Uterus (tissue), 4 donors: ENCODE measurements at regions of chr15 and their contacts with region 1.

Region 1: GRCh38 chr15:49718234-49718633 is 97.4 kb downstream of the DTWD1 start:
- DNase-seq: no peak
- H3K4me3 ChIP-seq: no peak overlapping the region
- H3K27ac ChIP-seq: peak overlapping the region; percentile 48 to 53
- H3K4me1 ChIP-seq: no peaks in the 10 kb centered on the region
- H3K27me3 ChIP-seq: no peaks in the 10 kb centered on the region
- CTCF ChIP-seq: no peak
- POLR2A ChIP-seq: no peak

Region 2: GRCh38 chr15:49686599-49686998 is 31.6 kb before region 1 on chr15:
- intact Hi-C with region 1: loop called (anchors 1 kb)
- DNase-seq: no peak
- H3K4me3 ChIP-seq: no peak overlapping the region
- H3K27ac ChIP-seq: no peak overlapping the region
- H3K4me1 ChIP-seq: no peaks in the 10 kb centered on the region
- H3K27me3 ChIP-seq: no peaks in the 10 kb centered on the region
- CTCF ChIP-seq: no peak
- POLR2A ChIP-seq: no peak

Region 3: DNA sequence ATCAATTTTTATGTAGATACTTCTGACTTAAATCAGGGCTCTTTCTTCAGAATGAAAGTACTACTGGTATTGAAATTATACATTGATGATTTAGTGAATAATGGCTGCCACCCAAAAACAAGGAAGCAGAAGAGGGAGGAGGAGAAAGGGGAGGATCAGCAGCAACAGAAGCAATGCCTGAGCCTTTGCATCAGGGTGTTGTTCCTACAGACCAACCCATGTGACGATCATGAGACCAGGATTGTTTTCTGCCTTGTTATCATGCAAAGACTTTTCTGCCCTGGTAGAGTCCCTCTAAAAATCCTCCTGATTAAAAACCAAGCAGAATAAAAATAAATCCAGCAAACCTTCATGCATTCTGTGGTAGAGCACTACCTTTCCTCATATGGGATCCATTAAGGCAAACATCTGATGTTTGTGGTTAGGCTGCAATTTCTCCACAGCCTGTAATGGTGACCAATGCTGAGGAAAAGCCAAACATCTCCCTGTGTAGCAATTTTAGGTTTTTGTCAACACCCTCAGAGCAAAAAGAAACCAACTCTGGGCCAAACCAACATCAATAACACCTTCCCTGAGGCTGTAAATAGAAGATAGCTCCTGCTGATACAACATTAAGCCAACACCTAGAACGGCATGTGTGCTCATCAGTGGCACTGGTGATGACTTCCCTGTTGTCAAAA is 209.1 kb after region 1 on chr15:
- intact Hi-C with region 1: no loop called
- DNase-seq: no peak
- H3K4me3 ChIP-seq: no peak overlapping the region
- H3K27ac ChIP-seq: no peak overlapping the region
- H3K4me1 ChIP-seq: no peaks in the 10 kb centered on the region
- H3K27me3 ChIP-seq: no peaks in the 10 kb centered on the region
- CTCF ChIP-seq: no peak
- POLR2A ChIP-seq: no peak